Sigmoid colon (tissue), 7 donors: ENCODE measurements at regions of chr12 and their contacts with region 1.

Region 1: GRCh38 chr12:7935590-7936581 is at the start of gene SLC2A3:
- DNase-seq: peak; percentile 75
- H3K4me3 ChIP-seq: peak within 1 kb of the TSS; percentile 37 to 54 (median 46)
- H3K27ac ChIP-seq: peak within 1 kb of the TSS; percentile 55 to 84 (median 72)
- H3K4me1 ChIP-seq: peaks cover 0 to 17% (median 11%) of the 10 kb centered on the region in 4 donors
- H3K27me3 ChIP-seq: no peaks in the 10 kb centered on the region
- CTCF ChIP-seq: no peak
- EP300 ChIP-seq: no peak
- POLR2A ChIP-seq: peak; percentile 53 to 71
- total RNA-seq, gene SLC2A3: 12.8 to 110 (median 30.9) TPM

Region 2: GRCh38 chr12:7859552-7859951 is 76.3 kb before region 1 on chr12:
- intact Hi-C with region 1: loop called (anchors 2 kb)
- DNase-seq: no peak
- H3K4me3 ChIP-seq: no peak overlapping the region
- H3K27ac ChIP-seq: peak overlapping the region in 2 of 4 donors; percentile 84 to 85
- H3K4me1 ChIP-seq: peaks cover 0 to 12% (median 10%) of the 10 kb centered on the region in 4 donors
- H3K27me3 ChIP-seq: no peaks in the 10 kb centered on the region
- CTCF ChIP-seq: no peak
- EP300 ChIP-seq: no peak
- POLR2A ChIP-seq: no peak

Region 3: GRCh38 chr12:7959701-7960121 is 23.8 kb after region 1 on chr12:
- intact Hi-C with region 1: loop called (anchors 2 kb)
- DNase-seq: no peak
- H3K4me3 ChIP-seq: no peak overlapping the region
- H3K27ac ChIP-seq: peak overlapping the region in 1 of 4 donors; percentile 74
- H3K4me1 ChIP-seq: peaks cover 0 to 6% (median 0%) of the 10 kb centered on the region in 4 donors
- H3K27me3 ChIP-seq: no peaks in the 10 kb centered on the region
- CTCF ChIP-seq: no peak
- EP300 ChIP-seq: no peak
- POLR2A ChIP-seq: no peak

Region 4: DNA sequence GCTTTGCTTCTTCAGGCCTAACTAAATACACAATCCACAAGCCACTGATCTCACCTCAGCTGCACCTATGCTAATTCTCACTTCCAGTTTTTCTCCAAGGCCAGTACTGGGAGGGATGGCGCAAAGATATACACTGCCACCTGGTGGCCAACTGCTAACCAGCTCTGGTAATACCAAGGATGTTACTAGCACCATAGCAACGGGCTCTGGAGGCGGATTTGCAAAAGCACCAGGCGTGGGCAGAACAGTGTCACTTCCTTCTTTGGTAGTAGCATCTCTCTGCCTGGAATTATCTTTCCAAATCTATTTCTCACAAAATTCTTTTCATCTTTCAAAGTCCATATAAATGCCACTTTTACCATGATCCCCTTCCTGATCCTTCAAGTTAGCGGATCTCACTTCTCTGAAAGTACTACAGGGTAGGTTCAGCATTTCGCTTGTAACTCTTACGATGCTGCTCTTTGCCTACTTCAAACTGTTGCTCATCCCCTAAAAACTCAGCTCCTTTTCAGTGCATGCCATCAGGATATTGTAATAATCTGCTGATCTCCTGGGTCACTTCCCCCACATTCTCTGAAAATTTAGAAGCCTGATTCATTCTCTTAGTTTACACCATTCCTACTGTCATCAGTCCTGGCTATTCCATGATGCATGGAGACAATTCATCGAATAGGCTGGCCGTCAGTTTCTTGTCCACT is 59.5 kb after region 1 on chr12:
- intact Hi-C with region 1: loop called (anchors 1 kb)
- DNase-seq: peak; percentile 92
- H3K4me3 ChIP-seq: no peak overlapping the region
- H3K27ac ChIP-seq: peak overlapping the region in 3 of 4 donors; percentile 21 to 55 (median 52)
- H3K4me1 ChIP-seq: no peaks in the 10 kb centered on the region
- H3K27me3 ChIP-seq: no peaks in the 10 kb centered on the region
- CTCF ChIP-seq: peak; percentile 78 to 81 (median 81)
- EP300 ChIP-seq: no peak
- POLR2A ChIP-seq: no peak